ENCODE measurements at regions of chr11 and their contacts with region 1.

Region 1: DNA sequence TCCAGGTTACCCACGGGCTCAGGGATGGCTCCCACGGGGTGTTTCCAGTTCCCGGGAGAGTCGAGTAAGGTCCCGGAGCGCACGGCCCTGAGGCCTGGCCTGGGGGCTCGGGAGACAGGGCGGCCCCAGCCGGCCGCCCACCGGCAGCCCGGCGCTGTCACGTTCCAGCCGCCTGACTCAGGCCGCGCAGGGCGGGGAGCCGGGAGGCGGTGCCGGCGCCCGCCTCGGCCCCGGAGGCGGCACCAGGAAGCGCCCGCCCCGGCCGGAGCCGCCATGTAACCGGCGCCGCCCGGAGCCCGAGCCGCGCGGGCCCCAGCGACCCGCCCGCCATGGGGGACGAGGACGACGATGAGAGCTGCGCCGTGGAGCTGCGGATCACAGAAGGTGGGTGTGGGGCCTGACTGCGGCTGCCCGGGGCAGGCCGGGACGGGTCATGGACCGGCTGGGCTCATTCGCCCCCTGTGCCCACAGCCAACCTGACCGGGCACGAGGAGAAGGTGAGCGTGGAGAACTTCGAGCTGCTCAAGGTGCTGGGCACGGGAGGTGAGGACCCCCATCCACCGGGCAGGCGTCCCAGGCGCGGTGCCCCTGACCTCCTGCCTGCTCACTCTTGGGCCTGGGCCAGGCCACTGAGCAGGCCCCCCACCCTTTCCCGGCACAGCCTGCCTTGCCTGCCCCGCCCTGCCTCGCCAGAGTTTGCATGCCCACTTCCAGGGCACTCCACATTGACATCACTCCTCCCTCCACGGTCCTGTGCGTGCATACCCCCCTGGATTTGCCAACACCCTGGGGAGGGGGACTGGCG is at the start of gene RPS6KA4:
- DNase-seq: peak; percentile 65
- H3K4me3 Mint-ChIP-seq: peak within 1 kb of the TSS; percentile 92
- H3K27ac Mint-ChIP-seq: peak within 1 kb of the TSS; percentile 89
- H3K4me1 Mint-ChIP-seq: peaks cover 40% of the 10 kb centered on the region
- H3K27me3 Mint-ChIP-seq: no peaks in the 10 kb centered on the region
- total RNA-seq, gene RPS6KA4: 40.2 to 43.5 TPM

Region 2: GRCh38 chr11:64317957-64318693 is 41.0 kb before region 1 on chr11 and contains the start of gene PRDX5:
- CTCF ChIA-PET with region 1: interaction called, 28 read pairs
- POLR2A ChIA-PET with region 1: interaction called, 29 read pairs
- DNase-seq: peak; percentile 96
- H3K4me3 Mint-ChIP-seq: peak within 1 kb of the TSS; percentile 91
- H3K27ac Mint-ChIP-seq: peak within 1 kb of the TSS; percentile 96
- H3K4me1 Mint-ChIP-seq: peaks cover 53% of the 10 kb centered on the region
- H3K27me3 Mint-ChIP-seq: no peaks in the 10 kb centered on the region
- total RNA-seq, gene PRDX5: 137 to 139 TPM

Region 3: DNA sequence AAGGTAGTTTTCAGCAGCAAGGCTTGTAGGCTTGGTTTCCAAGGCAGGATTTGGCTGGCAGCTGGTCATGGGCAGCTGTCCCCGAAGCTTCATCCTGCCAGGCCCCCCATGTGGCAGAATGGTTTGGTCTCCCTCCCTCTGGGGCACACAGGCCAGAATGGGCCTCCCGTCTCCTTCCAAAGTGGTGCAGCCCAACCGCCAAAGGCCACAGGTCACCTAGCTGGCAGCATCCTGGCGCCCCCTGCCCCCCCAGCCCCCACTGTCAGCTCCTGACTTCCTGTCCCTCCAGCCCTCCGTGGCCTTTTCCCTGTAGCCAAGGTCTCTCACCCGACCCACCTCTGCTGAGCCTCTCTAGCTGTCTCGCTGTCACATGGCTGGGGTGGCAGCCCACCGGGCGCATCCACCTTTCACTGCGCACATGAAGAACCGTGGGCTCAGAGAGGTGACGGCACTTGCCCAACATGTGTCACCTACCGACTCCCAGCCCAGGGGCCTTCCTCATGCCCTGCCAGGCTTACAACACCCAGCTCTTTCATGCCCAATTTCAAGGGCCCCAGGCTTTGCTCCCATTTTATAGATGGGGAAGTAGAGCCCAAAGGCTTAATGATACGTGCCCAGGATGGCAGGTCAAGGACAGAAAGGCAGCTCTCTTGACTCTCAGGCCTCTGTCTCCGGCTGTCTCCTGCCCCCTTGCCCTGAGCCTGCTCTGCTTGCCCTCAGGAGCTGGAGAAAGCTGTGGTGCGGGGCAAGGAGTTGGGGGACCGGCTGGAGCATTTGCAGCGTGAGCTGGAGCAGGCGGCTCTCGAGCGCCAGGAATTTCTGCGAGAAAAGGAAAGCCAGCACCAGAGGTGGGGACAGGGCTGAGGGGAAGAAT is 10.3 kb before region 1 on chr11:
- CTCF ChIA-PET with region 1: interaction called, 3 read pairs
- POLR2A ChIA-PET with region 1: interaction called, 29 read pairs
- DNase-seq: no peak
- H3K4me3 Mint-ChIP-seq: no peak overlapping the region
- H3K27ac Mint-ChIP-seq: no peak overlapping the region
- H3K4me1 Mint-ChIP-seq: peaks cover 13% of the 10 kb centered on the region
- H3K27me3 Mint-ChIP-seq: no peaks in the 10 kb centered on the region

Region 4: GRCh38 chr11:64531906-64532312 is 172.8 kb after region 1 on chr11:
- CTCF ChIA-PET with region 1: no interaction called
- POLR2A ChIA-PET with region 1: no interaction called
- DNase-seq: no peak
- H3K4me3 Mint-ChIP-seq: no peak overlapping the region
- H3K27ac Mint-ChIP-seq: no peak overlapping the region
- H3K4me1 Mint-ChIP-seq: no peaks in the 10 kb centered on the region
- H3K27me3 Mint-ChIP-seq: peaks cover 36% of the 10 kb centered on the region

Measured in activated CD4-positive, alpha-beta memory T cell treated with anti-CD3 and anti-CD28 coated beads, Interleukin-2, amount 10 ng/mL, durations not matched to agents 7 days and 5 days (primary cell).